ENCODE measurements at regions of chr1 and their contacts with region 1.

Region 1: DNA sequence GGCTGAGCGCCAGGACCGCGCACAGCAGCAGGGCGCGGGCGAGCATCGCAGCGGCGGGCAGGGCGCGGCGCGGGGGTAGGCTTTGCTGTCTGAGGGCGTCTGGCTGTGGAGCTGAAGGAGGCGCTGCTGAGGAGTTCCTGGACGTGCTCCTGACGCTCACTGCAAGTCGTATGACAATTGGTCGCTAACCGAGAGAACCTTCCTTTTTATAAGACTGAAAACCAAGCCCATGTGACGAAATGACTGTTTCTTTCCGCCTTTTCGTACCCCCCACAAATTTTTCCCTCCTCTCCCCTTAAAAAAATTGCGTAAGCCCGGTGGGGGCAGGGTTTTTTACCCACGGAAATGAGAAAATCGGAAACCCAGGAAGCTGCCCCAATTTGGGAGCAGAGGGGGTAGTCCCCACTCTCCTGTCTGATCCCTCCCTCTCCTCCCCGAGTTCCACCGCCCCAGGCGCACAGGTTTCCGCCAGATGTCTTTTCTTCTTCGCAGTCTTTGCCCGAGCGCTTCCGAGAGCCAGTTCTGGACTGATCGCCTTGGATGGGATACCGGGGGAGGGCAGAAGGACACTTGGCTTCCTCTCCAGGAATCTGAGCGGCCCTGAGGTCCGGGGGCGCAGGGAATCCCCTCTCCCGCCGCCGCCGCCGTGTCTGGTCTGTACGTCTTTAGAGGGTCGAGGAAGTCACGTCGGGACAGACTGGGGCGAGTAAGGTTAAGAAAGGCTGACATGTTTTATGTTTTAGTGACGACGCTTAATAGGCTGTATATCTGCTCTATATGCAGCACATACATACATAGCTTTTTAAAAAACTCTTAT is at the start of gene PTGS2:
- DNase-seq: peak; percentile 74
- H3K4me3 ChIP-seq: peak within 1 kb of the TSS; percentile 46 to 52
- H3K27ac ChIP-seq: peak within 1 kb of the TSS; percentile 81 to 92
- H3K4me1 ChIP-seq: no peaks in the 10 kb centered on the region
- H3K27me3 ChIP-seq: no peaks in the 10 kb centered on the region
- CTCF ChIP-seq: peak in 3 of 4 experiments; percentile 35 to 68 (median 64)
- POLR2A ChIP-seq: peak; percentile 86
- total RNA-seq, gene PTGS2: 11.2 to 14.3 TPM

Region 2: DNA sequence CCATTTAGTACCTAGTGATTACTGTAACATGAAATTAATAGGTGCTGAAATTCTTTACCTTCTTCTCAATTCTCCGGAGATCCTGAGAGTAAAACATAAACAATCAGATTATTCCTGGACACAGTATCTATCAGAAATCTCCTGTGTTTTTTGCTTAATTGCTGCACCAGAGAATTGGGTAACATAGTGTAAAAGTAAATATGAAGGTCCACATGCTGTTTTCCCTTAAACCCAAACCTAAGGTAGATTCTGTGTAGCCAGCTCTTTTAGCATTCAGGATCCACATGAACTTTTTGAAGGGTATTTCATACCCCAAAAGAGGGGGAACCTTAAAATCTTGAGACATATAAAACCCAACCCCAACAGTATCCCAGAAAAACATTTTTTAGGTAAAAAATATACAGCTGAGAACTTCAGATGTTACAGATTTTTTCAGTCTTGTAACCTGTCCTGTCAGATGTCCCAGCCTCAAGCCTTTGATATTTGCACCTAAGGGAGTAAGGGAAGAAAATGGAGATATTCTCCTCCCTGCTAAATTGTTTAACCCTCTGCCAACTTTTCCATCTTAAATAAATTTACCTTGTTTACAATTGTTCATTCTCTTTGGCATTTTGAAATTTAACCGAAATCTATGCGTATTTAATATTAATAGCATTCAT is 293.6 kb before region 1 on chr1:
- intact Hi-C with region 1: no loop called
- DNase-seq: no peak
- H3K4me3 ChIP-seq: no peak overlapping the region
- H3K27ac ChIP-seq: no peak overlapping the region
- H3K4me1 ChIP-seq: no peaks in the 10 kb centered on the region
- H3K27me3 ChIP-seq: no peaks in the 10 kb centered on the region
- CTCF ChIP-seq: no peak
- POLR2A ChIP-seq: no peak

Region 3: DNA sequence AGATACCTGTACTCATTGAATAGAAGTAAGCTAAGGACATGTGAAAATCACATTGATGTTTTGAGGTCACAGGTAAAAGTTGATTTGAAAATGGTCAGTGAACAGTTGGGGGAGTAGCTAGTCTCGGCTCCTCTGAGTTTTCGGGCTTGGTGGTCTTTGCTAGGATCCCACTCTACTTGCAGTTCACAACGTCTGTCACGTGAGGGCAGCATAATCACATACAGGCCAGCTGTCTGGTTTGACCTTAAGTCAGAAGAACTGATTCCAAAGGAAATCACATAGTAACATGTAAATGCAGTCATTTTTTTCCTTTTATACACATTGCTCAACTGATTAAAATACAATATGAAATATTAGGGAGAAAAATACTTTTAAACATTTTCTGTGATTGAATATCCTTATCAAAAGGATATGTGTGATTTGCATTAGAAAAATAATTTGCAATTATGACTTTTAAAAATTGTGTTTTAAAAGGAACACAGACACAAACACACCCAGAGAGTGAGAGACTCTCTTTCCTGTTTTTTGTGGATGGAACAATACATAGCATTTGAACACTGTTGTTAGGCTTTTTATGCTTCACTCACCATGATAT is 197.7 kb before region 1 on chr1:
- intact Hi-C with region 1: loop called (anchors 5 kb)
- DNase-seq: peak; percentile 33
- H3K4me3 ChIP-seq: no peak overlapping the region
- H3K27ac ChIP-seq: no peak overlapping the region
- H3K4me1 ChIP-seq: no peaks in the 10 kb centered on the region
- H3K27me3 ChIP-seq: no peaks in the 10 kb centered on the region
- CTCF ChIP-seq: peak; percentile 44 to 86 (median 64)
- POLR2A ChIP-seq: no peak